Activated B cell treated with CpG ODN at 0.5 μM for 24 hours (primary cell): ENCODE measurements at regions of chr20 and their contacts with region 1.

Region 1: GRCh38 chr20:1802385-1803060 is 92.7 kb upstream of the SIRPA start:
- DNase-seq: peak; percentile 65
- ATAC-seq: peak; percentile 71
- H3K4me3 Mint-ChIP-seq: peak overlapping the region; percentile 85
- H3K27ac Mint-ChIP-seq: peak overlapping the region; percentile 76
- H3K4me1 Mint-ChIP-seq: peaks cover 25% of the 10 kb centered on the region
- H3K27me3 Mint-ChIP-seq: no peaks in the 10 kb centered on the region
- CTCF ChIP-seq: peak; percentile 60

Region 2: GRCh38 chr20:1764136-1765033 is 38.1 kb before region 1 on chr20:
- CTCF ChIA-PET with region 1: interaction called, 14 read pairs
- POLR2A ChIA-PET with region 1: no interaction called
- intact Hi-C with region 1: no loop called
- DNase-seq: peak; percentile 46
- ATAC-seq: peak; percentile 86
- H3K4me3 Mint-ChIP-seq: no peak overlapping the region
- H3K27ac Mint-ChIP-seq: no peak overlapping the region
- H3K4me1 Mint-ChIP-seq: peaks cover 2% of the 10 kb centered on the region
- H3K27me3 Mint-ChIP-seq: peaks cover 5% of the 10 kb centered on the region
- CTCF ChIP-seq: peak; percentile 45

Region 3: GRCh38 chr20:1844325-1845162 is 42.0 kb after region 1 on chr20:
- CTCF ChIA-PET with region 1: interaction called, 6 read pairs
- POLR2A ChIA-PET with region 1: interaction called, 33 read pairs
- intact Hi-C with region 1: loop called (anchors 1 kb)
- DNase-seq: peak; percentile 61
- ATAC-seq: peak; percentile 98
- H3K4me3 Mint-ChIP-seq: peak overlapping the region; percentile 65
- H3K27ac Mint-ChIP-seq: peak overlapping the region; percentile 78
- H3K4me1 Mint-ChIP-seq: peaks cover 73% of the 10 kb centered on the region
- H3K27me3 Mint-ChIP-seq: no peaks in the 10 kb centered on the region
- CTCF ChIP-seq: no peak

Region 4: GRCh38 chr20:1870792-1871550 is 68.4 kb after region 1 on chr20:
- CTCF ChIA-PET with region 1: interaction called, 36 read pairs
- POLR2A ChIA-PET with region 1: interaction called, 27 read pairs
- intact Hi-C with region 1: loop called (anchors 1 kb)
- DNase-seq: peak; percentile 58
- ATAC-seq: peak; percentile 76
- H3K4me3 Mint-ChIP-seq: peak overlapping the region; percentile 59
- H3K27ac Mint-ChIP-seq: peak overlapping the region; percentile 79
- H3K4me1 Mint-ChIP-seq: peaks cover 62% of the 10 kb centered on the region
- H3K27me3 Mint-ChIP-seq: peaks cover 11% of the 10 kb centered on the region
- CTCF ChIP-seq: no peak

Region 5: GRCh38 chr20:1900321-1900801 is 97.8 kb after region 1 on chr20:
- CTCF ChIA-PET with region 1: interaction called, 11 read pairs
- POLR2A ChIA-PET with region 1: interaction called, 19 read pairs
- intact Hi-C with region 1: loop called (anchors 1 kb)
- DNase-seq: no peak
- ATAC-seq: peak; percentile 11
- H3K4me3 Mint-ChIP-seq: no peak overlapping the region
- H3K27ac Mint-ChIP-seq: no peak overlapping the region
- H3K4me1 Mint-ChIP-seq: peaks cover 49% of the 10 kb centered on the region
- H3K27me3 Mint-ChIP-seq: no peaks in the 10 kb centered on the region
- CTCF ChIP-seq: no peak

Region 6: DNA sequence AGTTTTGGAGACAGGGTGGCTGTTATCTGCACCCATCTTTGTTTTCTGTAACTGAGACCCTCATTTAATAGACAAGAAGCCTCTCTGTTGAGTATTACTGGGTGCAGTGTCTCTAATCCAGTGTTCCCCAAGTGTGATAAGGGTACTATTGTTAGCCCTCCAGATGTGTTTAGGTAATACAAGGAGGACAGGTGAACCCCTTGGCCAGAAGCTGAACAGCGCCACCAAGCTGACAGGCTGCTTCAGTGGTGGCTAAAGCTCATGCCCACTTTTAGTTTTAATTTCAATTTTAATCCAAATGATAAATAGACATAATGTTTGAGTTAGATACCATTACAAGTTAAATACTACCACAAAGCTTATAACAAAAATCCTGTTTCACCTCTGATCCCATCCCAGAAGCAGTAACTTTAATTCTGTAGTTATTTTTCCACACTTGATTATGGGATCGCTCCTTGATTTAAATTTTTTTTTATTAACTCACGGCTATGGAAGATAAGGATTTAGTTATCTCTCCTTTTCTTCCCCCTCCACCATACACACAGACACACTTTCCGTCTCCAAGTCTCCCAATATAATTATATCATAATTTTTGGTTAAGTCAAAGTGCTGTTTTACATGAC is 290.7 kb after region 1 on chr20:
- CTCF ChIA-PET with region 1: interaction called, 16 read pairs
- POLR2A ChIA-PET with region 1: no interaction called
- intact Hi-C with region 1: loop called (anchors 1 kb)
- DNase-seq: no peak
- ATAC-seq: no peak
- H3K4me3 Mint-ChIP-seq: no peak overlapping the region
- H3K27ac Mint-ChIP-seq: no peak overlapping the region
- H3K4me1 Mint-ChIP-seq: peaks cover 5% of the 10 kb centered on the region
- H3K27me3 Mint-ChIP-seq: peaks cover 32% of the 10 kb centered on the region
- CTCF ChIP-seq: no peak

Region 7: DNA sequence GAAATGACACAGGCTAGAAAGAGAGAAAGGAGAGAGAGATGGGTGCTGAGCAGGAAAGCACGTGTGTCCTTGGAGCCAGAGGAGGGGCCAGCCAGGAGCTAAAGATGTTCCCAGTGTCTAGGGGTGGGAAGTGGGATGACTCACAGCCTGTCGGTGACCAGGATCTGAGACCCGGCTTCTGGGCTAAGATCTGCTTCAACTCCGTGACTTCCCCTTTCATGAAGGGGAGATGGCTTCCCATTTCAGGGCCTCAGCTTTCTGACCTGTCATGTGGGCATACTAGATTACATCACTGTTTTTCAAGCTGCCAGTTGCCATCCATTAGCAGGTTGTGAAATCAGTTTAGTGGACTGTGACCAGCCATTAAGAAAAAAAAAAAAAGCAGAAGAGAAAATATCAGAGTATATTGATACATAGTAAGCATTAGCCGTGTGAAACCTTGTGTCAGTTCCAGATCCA is 498.7 kb after region 1 on chr20:
- CTCF ChIA-PET with region 1: no interaction called
- POLR2A ChIA-PET with region 1: no interaction called
- intact Hi-C with region 1: loop called (anchors 5 kb)
- DNase-seq: peak; percentile 52
- ATAC-seq: peak; percentile 94
- H3K4me3 Mint-ChIP-seq: peak overlapping the region; percentile 8
- H3K27ac Mint-ChIP-seq: peak overlapping the region; percentile 87
- H3K4me1 Mint-ChIP-seq: peaks cover 33% of the 10 kb centered on the region
- H3K27me3 Mint-ChIP-seq: no peaks in the 10 kb centered on the region
- CTCF ChIP-seq: no peak